Sigmoid colon (tissue), 7 donors: ENCODE measurements at regions of chr4 and their contacts with region 1.

Region 1: GRCh38 chr4:118278473-118279274 is 74.1 kb downstream of the PRSS12 start:
- DNase-seq: peak; percentile 98
- H3K4me3 ChIP-seq: peak overlapping the region; percentile 54 to 72 (median 66)
- H3K27ac ChIP-seq: peak overlapping the region; percentile 89 to 92 (median 91)
- H3K4me1 ChIP-seq: peaks cover 0 to 29% (median 18%) of the 10 kb centered on the region in 4 donors
- H3K27me3 ChIP-seq: no peaks in the 10 kb centered on the region
- CTCF ChIP-seq: no peak
- EP300 ChIP-seq: peak in 1 of 4 donors; percentile 27
- POLR2A ChIP-seq: peak; percentile 64 to 88

Region 2: DNA sequence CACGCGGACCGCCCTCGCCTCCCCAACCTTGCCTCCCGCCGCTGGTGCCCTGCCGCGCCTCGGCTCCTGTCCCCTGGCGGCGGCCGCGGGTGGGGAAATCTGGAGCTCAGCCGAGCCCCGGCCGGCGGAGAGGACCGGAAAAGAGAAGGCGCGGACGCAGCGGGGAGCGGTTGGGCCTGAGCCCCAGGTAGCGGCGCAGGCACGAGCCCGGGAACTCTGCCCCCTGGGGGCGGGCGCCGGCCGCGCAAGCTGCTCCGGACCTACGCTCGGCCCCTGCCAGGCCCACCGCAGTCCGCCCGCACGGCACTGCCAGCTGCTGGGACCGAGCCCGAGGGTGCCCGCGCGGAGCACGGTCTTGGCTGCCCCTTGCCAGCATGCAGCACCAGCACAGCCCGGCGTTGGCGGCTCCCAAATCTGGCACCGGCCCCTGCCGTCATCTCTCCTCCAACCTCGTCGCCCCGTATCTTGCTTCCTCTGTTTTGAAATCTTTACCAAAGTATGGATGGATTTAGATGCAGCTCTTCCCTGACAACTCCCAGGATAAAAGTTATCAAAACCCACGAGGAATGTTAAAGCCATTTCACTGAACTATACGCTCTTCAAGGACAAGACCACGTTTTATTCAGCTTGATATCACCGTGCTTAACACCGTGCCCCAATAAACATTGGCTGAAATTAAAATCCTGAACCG is 74.3 kb after region 1 on chr4 and contains the start of gene PRSS12:
- intact Hi-C with region 1: loop called (anchors 5 kb)
- DNase-seq: peak; percentile 70
- H3K4me3 ChIP-seq: peak within 1 kb of the TSS; percentile 32 to 55 (median 50)
- H3K27ac ChIP-seq: peak within 1 kb of the TSS in 1 of 4 donors; percentile 20
- H3K4me1 ChIP-seq: peaks cover 0 to 17% (median 15%) of the 10 kb centered on the region in 4 donors
- H3K27me3 ChIP-seq: peaks cover 28 to 56% (median 30%) of the 10 kb centered on the region in 3 donors
- CTCF ChIP-seq: peak; percentile 15 to 69 (median 34)
- EP300 ChIP-seq: no peak
- POLR2A ChIP-seq: no peak
- total RNA-seq, gene PRSS12: 0.28 to 1.3 (median 0.52) TPM

Region 3: GRCh38 chr4:118684873-118685811 is 406.5 kb after region 1 on chr4 and contains the start of gene METTL14:
- intact Hi-C with region 1: loop called (anchors 5 kb)
- DNase-seq: peak; percentile 97
- H3K4me3 ChIP-seq: peak within 1 kb of the TSS; percentile 57 to 68 (median 64)
- H3K27ac ChIP-seq: peak within 1 kb of the TSS; percentile 90 to 92 (median 90)
- H3K4me1 ChIP-seq: peaks cover 0 to 18% (median 16%) of the 10 kb centered on the region in 4 donors
- H3K27me3 ChIP-seq: no peaks in the 10 kb centered on the region
- CTCF ChIP-seq: peak in 1 of 4 experiments; percentile 35
- EP300 ChIP-seq: no peak
- POLR2A ChIP-seq: peak; percentile 51
- total RNA-seq, gene METTL14: 13.8 to 54.6 (median 33.2) TPM